ENCODE measurements at regions of chr17 and their contacts with region 1.

Region 1: DNA sequence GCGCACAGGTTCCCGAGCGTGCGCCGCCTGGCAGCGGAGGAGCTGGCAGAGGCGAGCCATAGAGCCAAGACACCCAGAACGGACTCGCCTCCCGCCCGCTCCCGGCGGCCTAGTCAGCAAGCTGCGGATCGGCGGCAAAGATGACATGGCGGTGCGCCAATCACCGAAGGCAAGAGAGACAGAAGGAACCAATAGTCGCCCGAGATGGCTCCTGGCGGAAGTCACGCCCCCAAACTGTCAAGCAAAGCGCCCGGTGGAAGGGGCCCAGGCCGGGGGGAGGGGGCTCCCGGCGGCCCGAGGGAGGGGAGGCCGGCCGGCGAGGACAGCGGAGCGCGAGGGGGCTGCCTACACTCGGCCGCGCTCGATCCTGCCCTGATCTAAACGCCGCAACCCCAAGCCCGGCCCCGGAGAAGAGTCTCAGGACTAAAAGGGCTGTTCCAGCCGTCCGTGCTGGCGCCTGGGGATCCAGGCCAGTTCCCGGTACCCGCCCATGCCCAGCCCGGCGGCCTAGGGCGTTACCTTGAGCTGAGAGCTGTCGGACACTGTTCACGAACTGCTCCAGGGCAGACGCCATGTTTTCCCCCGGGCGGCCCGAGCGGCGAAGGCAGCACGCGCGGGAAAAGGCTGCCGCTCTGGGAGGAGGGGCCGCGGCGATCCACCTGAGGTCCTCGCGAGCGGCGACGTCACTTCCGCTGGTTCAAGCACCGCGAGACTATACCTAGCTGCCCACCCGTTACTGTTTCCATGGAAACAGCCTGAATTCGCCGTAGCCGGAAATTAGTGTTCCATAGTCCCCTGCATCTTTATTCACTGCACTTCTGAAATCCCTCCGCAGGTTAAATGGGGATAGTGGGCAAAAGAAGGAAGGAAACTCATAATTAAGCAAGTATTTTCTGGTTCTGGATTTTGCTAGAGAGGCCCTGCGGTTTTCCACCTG is at the start of gene COPS3:
- DNase-seq: peak; percentile 94
- ATAC-seq: peak; percentile 94
- H3K4me3 ChIP-seq: peak within 1 kb of the TSS; percentile 85 to 94
- H3K27ac ChIP-seq: peak within 1 kb of the TSS; percentile 89
- H3K4me1 ChIP-seq: peaks cover 13 to 17% of the 10 kb centered on the region in 2 experiments; a peak in 3 of 4 replicates
- H3K27me3 ChIP-seq: no peaks in the 10 kb centered on the region
- CTCF ChIP-seq: no peak
- POLR2A ChIP-seq: peak; percentile 75
- RAD21 ChIP-seq: no peak
- total RNA-seq, gene COPS3: 99.0 TPM

Region 2: DNA sequence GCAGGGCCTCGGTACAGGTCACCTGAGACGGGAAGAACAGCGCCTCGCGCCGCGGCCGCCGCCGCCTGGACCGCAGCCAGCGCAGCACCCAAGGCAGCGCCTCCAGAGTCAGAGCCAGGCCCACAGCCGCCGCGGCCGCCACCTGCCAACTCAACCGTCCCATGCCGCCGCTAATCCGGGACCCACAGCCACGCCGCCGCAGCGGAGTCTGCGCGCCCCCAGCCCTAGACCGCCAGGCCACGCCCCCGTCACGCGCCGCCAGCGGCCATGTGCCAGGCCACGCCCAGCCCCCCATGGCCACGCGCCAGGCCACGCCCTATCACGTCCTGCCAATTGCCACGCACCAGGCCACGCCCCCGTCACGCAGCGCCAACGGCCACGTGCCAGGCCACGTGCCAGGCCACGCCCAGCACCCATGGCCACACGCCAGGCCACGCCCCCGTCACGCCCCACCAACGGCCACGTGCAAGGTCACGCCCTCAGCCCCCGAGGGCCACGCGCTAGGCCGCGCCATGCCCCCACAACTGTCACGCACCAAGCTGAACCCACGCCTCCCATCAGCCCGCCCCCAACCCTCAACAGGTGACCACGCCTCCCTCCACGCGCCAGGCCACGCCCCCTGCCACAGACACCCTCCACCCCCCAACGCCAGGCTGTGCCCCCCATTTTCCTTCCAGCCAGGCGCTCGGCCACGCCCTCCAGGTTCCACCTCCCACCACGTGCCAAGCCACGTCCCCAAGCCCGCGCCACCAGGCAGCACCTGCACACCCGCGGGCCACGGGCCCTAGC is 74.6 kb before region 1 on chr17 and contains the start of gene PLD6:
- CTCF ChIA-PET with region 1: no interaction called
- POLR2A ChIA-PET with region 1: no interaction called
- RAD21 ChIA-PET with region 1: no interaction called
- intact Hi-C with region 1: loop called (anchors 2 kb)
- DNase-seq: peak; percentile 69
- ATAC-seq: peak; percentile 75
- H3K4me3 ChIP-seq: peak within 1 kb of the TSS; percentile 82 to 95
- H3K27ac ChIP-seq: peak within 1 kb of the TSS; percentile 89
- H3K4me1 ChIP-seq: peaks cover 7 to 31% of the 10 kb centered on the region in 2 experiments
- H3K27me3 ChIP-seq: no peaks in the 10 kb centered on the region
- CTCF ChIP-seq: no peak
- POLR2A ChIP-seq: peak; percentile 30
- RAD21 ChIP-seq: no peak
- total RNA-seq, gene PLD6: 15.6 TPM

Measured in HCT116 (cell line).